ENCODE measurements at regions of chr2 and their contacts with region 1.

Region 1: GRCh38 chr2:64914735-64915509 is 74.3 kb upstream of the SLC1A4 start:
- DNase-seq: peak in 1 of 5 donors; percentile 41
- ATAC-seq: peak in 2 of 4 donors; percentile 14 to 56
- H3K4me3 ChIP-seq: no peak overlapping the region
- H3K27ac ChIP-seq: no peak overlapping the region
- H3K4me1 ChIP-seq: peaks cover 0 to 13% (median 4%) of the 10 kb centered on the region in 12 donors
- H3K27me3 ChIP-seq: no peaks in the 10 kb centered on the region
- CTCF ChIP-seq: no peak
- POLR2A ChIP-seq: no peak

Region 2: DNA sequence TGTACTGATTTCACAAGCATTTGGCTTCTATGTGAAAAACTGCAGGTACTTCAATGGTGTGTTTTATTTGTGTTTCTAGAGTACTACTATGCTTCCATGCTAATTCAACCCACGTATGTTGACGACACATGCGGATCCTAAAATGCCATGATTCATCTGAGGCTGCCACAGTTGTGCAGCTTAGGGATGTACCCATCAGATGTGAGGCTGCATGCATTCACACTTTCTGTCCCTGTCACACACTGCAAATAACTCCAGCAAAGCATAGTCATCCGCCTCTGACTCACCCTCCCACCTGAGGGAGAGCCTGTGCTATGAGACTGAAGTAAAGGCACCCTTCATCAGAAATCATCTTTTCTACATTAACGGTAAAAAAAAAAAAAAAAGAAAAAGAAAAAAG is 239.1 kb before region 1 on chr2:
- intact Hi-C with region 1: no loop called
- DNase-seq: no peak
- ATAC-seq: no peak
- H3K4me3 ChIP-seq: no peak overlapping the region
- H3K27ac ChIP-seq: no peak overlapping the region
- H3K4me1 ChIP-seq: peaks cover 0 to 16% (median 0%) of the 10 kb centered on the region in 12 donors
- H3K27me3 ChIP-seq: no peaks in the 10 kb centered on the region
- CTCF ChIP-seq: no peak
- POLR2A ChIP-seq: no peak

Region 3: GRCh38 chr2:64825831-64826491 is 89.0 kb before region 1 on chr2:
- intact Hi-C with region 1: no loop called
- DNase-seq: no peak
- ATAC-seq: no peak
- H3K4me3 ChIP-seq: no peak overlapping the region
- H3K27ac ChIP-seq: no peak overlapping the region
- H3K4me1 ChIP-seq: peaks cover 0 to 2% (median under 1%) of the 10 kb centered on the region in 12 donors
- H3K27me3 ChIP-seq: no peaks in the 10 kb centered on the region
- CTCF ChIP-seq: no peak
- POLR2A ChIP-seq: no peak

Region 4: DNA sequence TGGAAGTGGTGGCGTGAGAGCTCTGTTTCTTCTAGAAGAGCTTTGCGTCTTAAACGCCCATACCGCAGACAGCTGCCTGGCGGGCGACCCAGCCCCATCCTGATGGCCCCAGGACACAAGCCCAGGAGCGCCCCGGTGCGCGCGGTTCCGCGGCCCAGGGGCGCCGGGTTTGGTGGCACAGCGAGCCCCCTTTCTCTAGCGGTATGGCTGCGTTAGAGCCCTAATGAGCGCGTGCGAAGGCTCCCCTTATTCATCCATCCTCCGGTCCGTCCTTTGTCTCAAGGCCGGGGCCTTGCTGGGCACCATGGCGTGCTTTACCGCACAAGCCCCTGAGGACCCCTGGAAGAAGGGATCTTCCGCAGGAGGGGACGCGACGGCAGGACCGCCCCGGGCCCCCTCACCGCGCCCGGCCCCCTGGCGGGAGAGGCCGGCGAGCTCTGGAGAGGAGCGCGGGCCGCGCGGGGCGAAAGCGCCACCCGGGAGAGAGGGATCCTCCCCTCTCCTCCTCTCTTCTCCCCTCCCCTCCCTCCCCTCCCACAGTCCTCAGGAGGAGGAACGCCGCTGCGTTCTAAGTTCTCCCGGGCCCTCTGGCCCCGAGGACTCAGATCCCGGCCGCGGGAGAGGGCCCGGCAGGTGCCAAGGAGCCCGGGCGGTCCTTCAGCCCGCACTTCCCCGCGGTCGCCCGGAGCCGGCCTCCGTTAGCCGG is 73.7 kb after region 1 on chr2:
- intact Hi-C with region 1: loop called in 4 of 10 experiments (anchors 2 to 5 kb)
- DNase-seq: peak in 4 of 5 donors; percentile 62 to 79 (median 73)
- ATAC-seq: peak; percentile 43 to 80 (median 78)
- H3K4me3 ChIP-seq: peak overlapping the region; percentile 71 to 97 (median 84)
- H3K27ac ChIP-seq: peak overlapping the region; percentile 87 to 99 (median 96)
- H3K4me1 ChIP-seq: peaks cover 0 to 45% (median 24%) of the 10 kb centered on the region in 12 donors
- H3K27me3 ChIP-seq: no peaks in the 10 kb centered on the region
- CTCF ChIP-seq: peak in 10 of 12 donors; percentile 36 to 70 (median 47)
- POLR2A ChIP-seq: peak in 1 of 2 donors; percentile 79

Region 5: GRCh38 chr2:65040400-65041261 is 125.7 kb after region 1 on chr2:
- intact Hi-C with region 1: loop called (anchors 1 to 5 kb)
- DNase-seq: peak; percentile 84 to 88 (median 87)
- ATAC-seq: peak; percentile 71 to 97 (median 96)
- H3K4me3 ChIP-seq: peak overlapping the region in 8 of 12 donors; percentile 4 to 34 (median 18)
- H3K27ac ChIP-seq: no peak overlapping the region
- H3K4me1 ChIP-seq: peaks cover 0 to 17% (median 4%) of the 10 kb centered on the region in 12 donors
- H3K27me3 ChIP-seq: no peaks in the 10 kb centered on the region
- CTCF ChIP-seq: peak; percentile 93 to 99 (median 96)
- POLR2A ChIP-seq: no peak

Region 6: GRCh38 chr2:65164426-65164891 is 249.5 kb after region 1 on chr2:
- intact Hi-C with region 1: loop called in 5 of 10 experiments (anchors 2 to 10 kb)
- DNase-seq: peak in 2 of 5 donors; percentile 38 to 40
- ATAC-seq: peak; percentile 76 to 93 (median 85)
- H3K4me3 ChIP-seq: no peak overlapping the region
- H3K27ac ChIP-seq: peak overlapping the region in 10 of 12 donors; percentile 26 to 78 (median 60)
- H3K4me1 ChIP-seq: peaks cover 0 to 41% (median 16%) of the 10 kb centered on the region in 12 donors
- H3K27me3 ChIP-seq: no peaks in the 10 kb centered on the region
- CTCF ChIP-seq: no peak
- POLR2A ChIP-seq: no peak

Region 7: GRCh38 chr2:65177751-65178442 is 263.0 kb after region 1 on chr2:
- intact Hi-C with region 1: loop called in 3 of 10 experiments (anchors 5 to 10 kb)
- DNase-seq: no peak
- ATAC-seq: no peak
- H3K4me3 ChIP-seq: no peak overlapping the region
- H3K27ac ChIP-seq: no peak overlapping the region
- H3K4me1 ChIP-seq: no peaks in the 10 kb centered on the region
- H3K27me3 ChIP-seq: no peaks in the 10 kb centered on the region
- CTCF ChIP-seq: no peak
- POLR2A ChIP-seq: no peak

Region 8: GRCh38 chr2:65193446-65193845 is 278.5 kb after region 1 on chr2:
- intact Hi-C with region 1: loop called in 7 of 10 experiments (anchors 5 to 10 kb)
- DNase-seq: no peak
- ATAC-seq: no peak
- H3K4me3 ChIP-seq: no peak overlapping the region
- H3K27ac ChIP-seq: no peak overlapping the region
- H3K4me1 ChIP-seq: peaks cover 0 to 4% (median 0%) of the 10 kb centered on the region in 12 donors
- H3K27me3 ChIP-seq: no peaks in the 10 kb centered on the region
- CTCF ChIP-seq: no peak
- POLR2A ChIP-seq: no peak